Activated CD4-positive, alpha-beta T cell treated with anti-CD3 and anti-CD28 coated beads, Interleukin-2, amount 10 ng/mL, durations not matched to agents 24 days and 14 days (primary cell): ENCODE measurements at regions of chr1 and their contacts with region 1.

Region 1: DNA sequence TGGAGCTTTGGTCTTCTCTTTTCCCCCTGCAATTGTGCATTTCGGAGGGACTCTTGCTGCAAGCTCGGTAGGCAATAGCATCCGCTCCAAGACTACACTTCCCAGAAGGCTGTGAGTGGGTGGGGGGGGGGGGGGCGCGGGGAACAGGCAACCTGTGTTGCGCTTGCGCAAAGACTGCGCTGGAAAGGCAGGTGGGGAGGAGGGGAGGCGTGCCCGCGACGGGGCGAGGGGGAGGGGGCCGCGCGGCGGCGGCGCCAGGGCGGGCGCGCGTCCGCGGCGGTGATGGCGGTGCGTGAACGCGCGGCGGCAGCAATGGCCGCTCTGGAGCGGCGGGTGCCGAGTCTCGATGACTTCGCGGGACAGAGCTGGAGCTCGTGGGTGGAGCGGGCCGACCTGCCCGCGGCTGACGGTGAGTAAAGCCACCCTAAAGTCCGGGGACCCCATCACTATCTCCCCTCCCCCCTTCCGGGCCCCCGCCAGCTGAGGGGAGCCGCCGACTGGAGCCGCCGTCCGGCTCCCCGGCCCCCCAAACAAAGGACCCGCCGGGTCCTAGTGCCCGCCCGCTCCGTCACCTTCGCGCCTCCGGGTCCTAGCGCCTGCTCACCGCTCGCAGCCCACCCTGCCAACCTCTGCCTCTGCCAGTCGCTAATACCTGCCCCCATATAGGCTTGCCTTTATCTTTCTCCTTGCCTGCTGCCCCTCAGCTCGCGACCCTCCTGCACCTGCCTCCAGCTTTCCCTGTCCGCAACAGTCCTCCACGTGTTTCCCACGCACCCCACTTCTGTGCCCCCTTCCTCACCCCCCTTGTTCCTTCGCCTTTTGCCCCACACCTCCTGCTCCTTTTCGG is at the start of gene ATXN7L2:
- DNase-seq: peak; percentile 96
- H3K4me3 Mint-ChIP-seq: peak within 1 kb of the TSS; percentile 99
- H3K27ac Mint-ChIP-seq: peak within 1 kb of the TSS; percentile 98
- H3K4me1 Mint-ChIP-seq: peaks cover 41% of the 10 kb centered on the region
- H3K27me3 Mint-ChIP-seq: peaks cover 19% of the 10 kb centered on the region
- total RNA-seq, gene ATXN7L2: 15.1 and 15.6 TPM in 2 replicates

Region 2: GRCh38 chr1:109248797-109249642 is 234.9 kb before region 1 on chr1 and contains the start of gene CELSR2:
- intact Hi-C with region 1: loop called (anchors 1 kb)
- DNase-seq: peak; percentile 92
- H3K4me3 Mint-ChIP-seq: peak within 1 kb of the TSS; percentile 71
- H3K27ac Mint-ChIP-seq: no peak within 1 kb of the TSS
- H3K4me1 Mint-ChIP-seq: peaks cover 4% of the 10 kb centered on the region
- H3K27me3 Mint-ChIP-seq: peaks cover 20% of the 10 kb centered on the region
- total RNA-seq, gene CELSR2: 3.8 and 4.1 TPM in 2 replicates

Region 3: DNA sequence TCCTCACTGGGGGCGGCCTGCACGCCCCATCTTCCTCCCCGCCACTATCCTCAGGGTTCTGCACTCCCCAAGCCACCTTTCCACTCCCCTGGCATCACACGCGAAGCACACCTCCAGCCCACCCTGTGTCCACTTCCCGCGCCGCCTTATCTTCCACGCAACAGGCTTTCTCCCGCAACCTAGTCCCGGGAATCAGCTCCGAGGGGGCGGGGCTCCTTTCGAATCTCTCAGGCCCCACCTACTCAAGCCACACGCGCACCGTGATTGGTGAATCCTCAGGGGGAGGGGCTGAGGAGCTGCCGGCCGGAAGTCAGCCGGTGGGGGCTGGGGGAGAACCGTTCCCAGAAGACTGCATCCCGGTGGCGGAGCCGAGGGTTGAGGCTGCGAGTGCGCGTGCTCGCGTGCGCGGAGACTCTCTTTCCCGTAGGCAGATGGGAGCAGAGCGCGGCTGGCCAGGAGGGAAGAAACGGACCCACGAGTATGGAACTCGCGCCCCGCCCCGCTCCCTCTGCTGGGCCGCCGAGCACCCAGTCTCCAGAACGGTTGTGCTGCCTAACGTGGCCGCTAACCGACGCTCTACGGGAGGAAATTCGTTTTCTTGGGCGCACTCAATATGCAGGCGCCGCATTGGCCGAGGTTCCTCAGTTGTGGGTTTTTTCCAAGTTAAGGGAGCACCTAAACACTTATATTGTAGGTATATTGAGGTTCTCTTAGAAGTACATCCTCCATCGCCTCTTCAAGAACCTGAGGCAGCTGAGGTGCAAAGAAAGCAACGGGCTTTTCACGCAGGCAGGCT is 200.7 kb before region 1 on chr1 and contains the start of gene PSRC1:
- intact Hi-C with region 1: loop called (anchors 1 kb)
- DNase-seq: peak; percentile 98
- H3K4me3 Mint-ChIP-seq: peak within 1 kb of the TSS; percentile 95
- H3K27ac Mint-ChIP-seq: peak within 1 kb of the TSS; percentile 95
- H3K4me1 Mint-ChIP-seq: peaks cover 19% of the 10 kb centered on the region
- H3K27me3 Mint-ChIP-seq: peaks cover 2% of the 10 kb centered on the region
- total RNA-seq, gene PSRC1: 4.5 and 5.0 TPM in 2 replicates

Region 4: DNA sequence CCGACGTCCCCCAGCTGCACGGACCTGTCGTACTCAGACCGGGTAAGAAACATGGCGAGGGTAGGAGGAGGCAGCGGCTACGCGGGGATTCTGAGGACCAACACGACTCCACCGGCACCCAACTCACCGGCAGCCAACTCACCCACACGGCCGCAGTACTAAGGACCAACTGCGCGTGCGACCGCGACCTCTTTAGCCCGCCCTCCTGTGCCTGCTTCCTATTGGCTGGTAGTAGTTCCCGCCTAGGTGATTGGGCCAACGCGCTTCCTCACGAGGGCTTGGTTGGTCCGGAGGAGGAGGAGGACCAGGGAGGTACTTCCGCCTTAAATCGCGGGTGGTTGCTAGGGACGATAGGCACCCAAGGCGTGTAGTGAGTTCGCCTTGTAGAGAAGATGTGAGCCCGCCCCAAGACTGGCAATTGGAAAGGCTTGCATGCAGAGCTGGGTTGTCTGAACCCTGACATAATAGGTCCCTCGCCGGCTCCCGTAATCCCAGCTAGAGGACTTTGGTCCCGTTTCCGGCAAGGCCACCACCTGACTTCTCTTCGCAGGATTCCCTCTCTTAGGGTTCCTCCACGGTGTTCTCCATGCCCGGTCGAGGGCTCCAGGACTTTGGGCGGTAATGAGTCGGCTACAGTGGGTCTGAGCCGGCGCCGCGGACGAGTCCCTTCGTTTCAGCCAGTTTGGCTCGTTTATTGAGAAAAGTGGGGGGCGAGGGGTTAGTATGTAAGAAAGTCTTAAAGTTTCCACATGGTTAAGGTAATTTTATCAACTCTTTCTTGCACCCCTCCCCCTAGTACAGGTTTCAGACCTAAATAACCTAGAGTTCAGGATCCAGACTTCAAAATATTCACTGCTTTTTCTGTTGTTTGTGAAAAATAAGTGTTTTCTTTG is 57.4 kb before region 1 on chr1 and contains the start of gene PSMA5:
- intact Hi-C with region 1: loop called (anchors 1 kb)
- DNase-seq: peak; percentile 98
- H3K4me3 Mint-ChIP-seq: peak within 1 kb of the TSS; percentile 94
- H3K27ac Mint-ChIP-seq: peak within 1 kb of the TSS; percentile 97
- H3K4me1 Mint-ChIP-seq: peaks cover 27% of the 10 kb centered on the region
- H3K27me3 Mint-ChIP-seq: peaks cover 2% of the 10 kb centered on the region
- total RNA-seq, gene PSMA5: 262 and 270 TPM in 2 replicates

Region 5: DNA sequence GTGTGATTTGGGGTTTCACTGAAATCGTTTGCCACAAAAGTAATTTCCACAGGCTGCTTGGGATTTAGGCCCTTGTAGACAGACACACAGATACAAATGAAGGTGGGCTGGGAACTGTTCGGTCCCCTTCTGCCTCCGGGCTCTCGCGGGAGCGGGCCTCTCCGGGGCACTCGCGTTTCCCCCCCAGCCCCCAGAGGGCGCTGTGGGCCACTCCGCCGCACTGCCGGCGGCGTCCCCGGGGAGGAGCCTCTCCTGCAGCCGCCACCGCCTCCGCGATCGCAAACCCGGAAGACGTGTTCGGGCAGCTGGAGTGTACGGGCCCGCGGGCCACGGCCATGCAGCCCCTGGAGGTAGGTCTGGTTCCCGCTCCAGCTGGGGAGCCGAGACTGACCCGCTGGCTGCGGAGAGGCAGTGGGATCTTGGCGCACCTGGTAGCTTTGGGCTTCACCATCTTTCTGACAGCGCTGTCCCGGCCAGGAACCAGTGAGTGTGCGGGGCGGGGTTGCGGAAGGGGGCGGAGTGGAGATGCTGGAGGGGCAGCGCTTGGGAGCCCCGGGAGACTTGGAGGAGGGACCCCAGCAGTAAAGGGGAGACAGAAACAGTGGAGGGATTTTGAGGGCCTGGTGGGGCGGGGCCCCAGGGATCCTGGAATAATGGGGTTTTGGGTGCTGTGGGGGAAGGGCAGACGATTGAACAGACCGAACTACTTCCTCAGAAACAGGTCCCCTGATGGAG is 10.1 kb after region 1 on chr1 and contains the start of gene CYB561D1:
- intact Hi-C with region 1: loop called (anchors 1 kb)
- DNase-seq: peak; percentile 97
- H3K4me3 Mint-ChIP-seq: peak within 1 kb of the TSS; percentile 93
- H3K27ac Mint-ChIP-seq: peak within 1 kb of the TSS; percentile 70
- H3K4me1 Mint-ChIP-seq: peaks cover 36% of the 10 kb centered on the region
- H3K27me3 Mint-ChIP-seq: no peaks in the 10 kb centered on the region
- total RNA-seq, gene CYB561D1: 11.3 and 13.1 TPM in 2 replicates

Region 6: DNA sequence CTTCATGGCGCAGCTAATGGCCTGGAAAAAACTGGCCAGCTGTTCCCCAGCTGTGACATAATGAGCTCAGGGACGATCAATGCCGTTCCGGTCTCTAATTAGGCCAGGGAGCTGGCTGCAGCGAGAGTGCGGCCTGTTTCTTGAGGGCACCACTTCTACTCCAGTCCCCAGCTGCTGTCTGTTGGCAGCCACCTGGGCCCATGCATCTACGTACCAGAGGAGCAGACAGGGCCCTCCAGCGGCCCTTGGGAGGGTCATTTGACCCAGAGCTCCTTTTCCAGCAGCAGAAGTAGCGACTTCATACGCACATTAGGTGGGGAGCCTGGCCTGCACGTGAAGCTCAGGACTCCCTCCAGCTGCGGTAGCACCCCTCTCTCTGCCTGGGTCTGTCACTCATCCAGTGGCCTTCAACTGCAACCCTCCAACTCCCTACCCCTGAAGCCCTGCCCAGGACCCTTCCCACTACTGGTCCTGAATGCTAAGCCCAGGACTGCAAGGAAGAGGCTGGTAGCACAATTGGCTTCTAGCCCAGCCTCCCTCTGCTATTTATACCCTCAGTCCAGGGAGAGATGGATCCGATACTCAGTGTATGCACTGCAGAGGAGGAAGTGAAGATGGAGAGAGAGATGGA is 46.7 kb after region 1 on chr1:
- intact Hi-C with region 1: no loop called
- DNase-seq: no peak
- H3K4me3 Mint-ChIP-seq: peak overlapping the region; percentile 36
- H3K27ac Mint-ChIP-seq: peak overlapping the region; percentile 40
- H3K4me1 Mint-ChIP-seq: peaks cover 23% of the 10 kb centered on the region
- H3K27me3 Mint-ChIP-seq: peaks cover 5% of the 10 kb centered on the region

Region 7: GRCh38 chr1:110034451-110035235 is 550.7 kb after region 1 on chr1 and contains the start of gene STRIP1:
- intact Hi-C with region 1: loop called (anchors 1 kb)
- DNase-seq: peak; percentile 98
- H3K4me3 Mint-ChIP-seq: peak within 1 kb of the TSS; percentile 97
- H3K27ac Mint-ChIP-seq: peak within 1 kb of the TSS; percentile 86
- H3K4me1 Mint-ChIP-seq: peaks cover 46% of the 10 kb centered on the region
- H3K27me3 Mint-ChIP-seq: no peaks in the 10 kb centered on the region
- total RNA-seq, gene STRIP1: 41.0 and 43.8 TPM in 2 replicates